Posterior vena cava (tissue), 2 donors: ENCODE measurements at regions of chr13 and their contacts with region 1.

Region 1: DNA sequence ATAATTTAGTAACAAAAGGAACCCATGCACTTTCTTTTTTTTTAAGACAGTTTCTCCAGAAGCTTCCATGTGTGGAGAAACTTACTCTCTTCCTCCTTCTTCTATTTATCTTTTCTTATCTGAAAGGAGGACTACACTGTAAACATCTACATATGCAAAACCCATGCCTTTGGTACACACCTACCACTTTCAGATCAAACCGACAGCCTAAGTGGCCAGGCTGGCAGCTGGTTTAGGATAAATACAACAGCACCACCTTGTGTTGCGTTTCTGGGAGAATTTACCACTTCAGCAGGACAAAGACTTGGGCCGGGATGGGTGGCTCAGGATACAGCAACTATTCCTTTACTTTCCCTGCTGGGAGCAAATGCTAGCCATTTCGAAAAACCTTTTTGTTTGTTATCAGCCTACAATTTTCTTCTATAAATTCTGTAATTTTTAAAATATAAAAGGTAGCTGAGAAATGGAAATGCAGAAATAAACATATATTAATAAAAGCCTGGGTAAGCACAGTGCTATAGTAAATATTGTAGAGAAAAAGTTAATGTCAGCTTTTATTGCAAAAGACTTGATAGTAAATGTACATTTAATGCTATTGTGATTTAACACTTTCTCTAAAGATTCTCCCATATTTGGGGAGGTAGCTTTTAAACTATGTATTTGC is 94.0 kb upstream of the RFC3 start:
- DNase-seq: peak; percentile 81

Region 2: DNA sequence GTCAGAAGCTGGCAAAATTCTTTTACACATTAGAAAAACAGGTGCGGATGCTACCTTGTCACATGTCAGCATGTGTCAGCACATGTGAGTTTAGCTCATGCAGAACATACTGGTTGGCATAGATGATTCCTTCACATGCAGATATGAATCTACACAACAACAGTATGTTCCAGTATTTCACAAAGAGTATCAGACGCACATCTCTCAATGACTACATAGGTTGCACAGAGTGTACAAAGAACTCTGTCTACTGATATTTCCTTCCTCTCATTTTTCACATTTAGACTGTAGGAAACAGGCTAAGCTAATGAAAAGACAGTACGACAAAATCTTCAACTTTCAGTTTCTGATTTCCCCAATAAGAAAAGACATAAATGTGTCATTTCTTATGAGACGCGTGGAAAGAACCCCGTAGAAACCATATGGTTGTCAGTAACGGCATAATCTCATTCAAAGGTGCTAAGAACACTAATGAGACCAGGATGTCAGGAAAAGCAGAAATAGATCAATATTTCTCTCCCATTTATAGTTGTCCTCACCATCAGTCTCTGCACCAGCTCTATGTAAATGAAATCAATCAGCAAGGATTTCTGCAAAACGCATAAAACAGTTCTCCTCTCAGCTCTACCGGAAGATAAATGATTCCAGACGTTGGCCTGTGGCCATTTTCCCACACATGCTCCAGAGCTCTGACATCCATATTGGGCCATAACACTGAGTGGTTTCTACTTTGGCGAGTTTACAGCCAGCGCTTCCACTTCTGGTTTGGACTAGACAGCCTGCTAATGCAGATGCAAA is 519.6 kb before region 1 on chr13:
- intact Hi-C with region 1: loop called in 1 of 2 experiments (anchors 10 kb)
- DNase-seq: peak; percentile 88

Region 3: GRCh38 chr13:33542283-33543088 is 181.4 kb before region 1 on chr13:
- intact Hi-C with region 1: loop called (anchors 10 kb)
- DNase-seq: peak; percentile 100